CD8-positive, alpha-beta T cell (primary cell): ENCODE measurements at regions of chr6 and their contacts with region 1.

Region 1: GRCh38 chr6:52664186-52664990 is 6.5 kb upstream of the TMEM14A start:
- DNase-seq: peak; percentile 5 to 70 (median 45)
- ATAC-seq: peak; percentile 66
- H3K4me3 ChIP-seq: peak overlapping the region; percentile 61 to 82
- H3K4me3 Mint-ChIP-seq: no peak overlapping the region
- H3K27ac ChIP-seq: no peak overlapping the region
- H3K27ac Mint-ChIP-seq: no peak overlapping the region
- H3K4me1 ChIP-seq: peaks cover 14% of the 10 kb centered on the region
- H3K4me1 Mint-ChIP-seq: no peaks in the 10 kb centered on the region
- H3K27me3 ChIP-seq: peaks cover 0 to 10% of the 10 kb centered on the region in 2 experiments
- H3K27me3 Mint-ChIP-seq: no peaks in the 10 kb centered on the region
- CTCF ChIP-seq: no peak

Region 2: GRCh38 chr6:51855310-51856082 is 808.9 kb before region 1 on chr6:
- CTCF ChIA-PET with region 1: no interaction called
- POLR2A ChIA-PET with region 1: no interaction called
- intact Hi-C with region 1: loop called in 1 of 2 experiments (anchors 5 kb)
- DNase-seq: peak in 2 of 9 experiments; percentile 28 to 49
- ATAC-seq: no peak
- H3K4me3 ChIP-seq: no peak overlapping the region
- H3K4me3 Mint-ChIP-seq: no peak overlapping the region
- H3K27ac ChIP-seq: no peak overlapping the region
- H3K27ac Mint-ChIP-seq: no peak overlapping the region
- H3K4me1 ChIP-seq: no peaks in the 10 kb centered on the region
- H3K4me1 Mint-ChIP-seq: no peaks in the 10 kb centered on the region
- H3K27me3 ChIP-seq: no peaks in the 10 kb centered on the region
- H3K27me3 Mint-ChIP-seq: peaks cover 8% of the 10 kb centered on the region
- CTCF ChIP-seq: peak; percentile 65

Region 3: GRCh38 chr6:52063584-52064344 is 600.6 kb before region 1 on chr6:
- CTCF ChIA-PET with region 1: no interaction called
- POLR2A ChIA-PET with region 1: no interaction called
- intact Hi-C with region 1: loop called (anchors 5 to 10 kb)
- DNase-seq: peak; percentile 10 to 80 (median 59)
- ATAC-seq: peak; percentile 84
- H3K4me3 ChIP-seq: peak overlapping the region; percentile 17 to 27
- H3K4me3 Mint-ChIP-seq: peak overlapping the region; percentile 78
- H3K27ac ChIP-seq: no peak overlapping the region
- H3K27ac Mint-ChIP-seq: peak overlapping the region; percentile 79
- H3K4me1 ChIP-seq: peaks cover 13% of the 10 kb centered on the region
- H3K4me1 Mint-ChIP-seq: peaks cover 11% of the 10 kb centered on the region
- H3K27me3 ChIP-seq: no peaks in the 10 kb centered on the region
- H3K27me3 Mint-ChIP-seq: no peaks in the 10 kb centered on the region
- CTCF ChIP-seq: peak; percentile 49

Region 4: GRCh38 chr6:52162940-52163908 is 501.2 kb before region 1 on chr6:
- CTCF ChIA-PET with region 1: interaction called, 3 read pairs
- POLR2A ChIA-PET with region 1: no interaction called
- intact Hi-C with region 1: loop called in 1 of 2 experiments (anchors 2 kb)
- DNase-seq: peak in 2 of 9 experiments; percentile 57 to 66
- ATAC-seq: peak; percentile 69
- H3K4me3 ChIP-seq: no peak overlapping the region
- H3K4me3 Mint-ChIP-seq: no peak overlapping the region
- H3K27ac ChIP-seq: no peak overlapping the region
- H3K27ac Mint-ChIP-seq: no peak overlapping the region
- H3K4me1 ChIP-seq: no peaks in the 10 kb centered on the region
- H3K4me1 Mint-ChIP-seq: no peaks in the 10 kb centered on the region
- H3K27me3 ChIP-seq: peaks cover 0 to 2% of the 10 kb centered on the region in 2 experiments
- H3K27me3 Mint-ChIP-seq: peaks cover 15% of the 10 kb centered on the region
- CTCF ChIP-seq: peak; percentile 67

Region 5: GRCh38 chr6:52407467-52407866 is 256.9 kb before region 1 on chr6:
- CTCF ChIA-PET with region 1: interaction called, 6 read pairs
- POLR2A ChIA-PET with region 1: no interaction called
- intact Hi-C with region 1: loop called (anchors 1 to 2 kb)
- DNase-seq: peak in 2 of 9 experiments; percentile 53 to 68
- ATAC-seq: peak; percentile 93
- H3K4me3 ChIP-seq: no peak overlapping the region
- H3K4me3 Mint-ChIP-seq: no peak overlapping the region
- H3K27ac ChIP-seq: no peak overlapping the region
- H3K27ac Mint-ChIP-seq: peak overlapping the region; percentile 70
- H3K4me1 ChIP-seq: no peaks in the 10 kb centered on the region
- H3K4me1 Mint-ChIP-seq: peaks cover 38% of the 10 kb centered on the region
- H3K27me3 ChIP-seq: no peaks in the 10 kb centered on the region
- H3K27me3 Mint-ChIP-seq: no peaks in the 10 kb centered on the region
- CTCF ChIP-seq: peak; percentile 48

Region 6: DNA sequence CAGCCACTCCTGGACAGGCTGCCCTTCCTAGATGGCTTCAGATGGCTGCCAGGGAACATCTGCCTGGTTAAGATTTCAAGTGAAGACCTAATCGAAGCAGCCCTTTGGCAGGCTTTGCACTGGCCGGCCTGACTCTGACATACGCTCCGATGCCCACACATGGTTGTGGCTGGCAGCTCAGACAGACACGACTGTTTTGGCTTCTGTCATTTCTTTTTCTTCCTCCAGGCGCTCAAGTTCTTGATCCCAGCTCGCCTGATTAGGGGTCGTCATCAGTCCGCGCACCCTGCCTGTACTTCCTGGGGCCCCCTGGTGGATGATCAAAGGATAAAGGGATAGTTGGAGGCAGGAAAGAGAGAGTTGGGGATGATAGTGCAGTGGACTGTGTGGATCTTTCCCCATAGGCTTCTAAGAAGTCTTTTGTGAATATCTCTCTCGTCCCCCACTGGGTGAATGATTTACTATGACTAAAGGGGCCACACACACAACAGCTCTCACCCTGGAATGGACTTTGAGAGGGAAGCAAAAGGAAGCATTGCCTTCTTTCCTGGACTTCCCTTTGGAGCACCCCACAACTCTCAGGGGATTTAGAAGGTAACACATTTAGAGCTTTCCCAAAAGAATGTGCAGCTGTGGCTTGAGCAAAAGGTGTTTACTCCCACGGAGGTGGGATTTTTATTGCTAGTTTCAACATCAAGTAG is 66.1 kb before region 1 on chr6:
- CTCF ChIA-PET with region 1: interaction called, 10 read pairs
- POLR2A ChIA-PET with region 1: no interaction called
- intact Hi-C with region 1: no loop called
- DNase-seq: peak in 4 of 9 experiments; percentile 30 to 58 (median 40)
- ATAC-seq: peak; percentile 62
- H3K4me3 ChIP-seq: no peak overlapping the region
- H3K4me3 Mint-ChIP-seq: no peak overlapping the region
- H3K27ac ChIP-seq: no peak overlapping the region
- H3K27ac Mint-ChIP-seq: no peak overlapping the region
- H3K4me1 ChIP-seq: no peaks in the 10 kb centered on the region
- H3K4me1 Mint-ChIP-seq: peaks cover 8% of the 10 kb centered on the region
- H3K27me3 ChIP-seq: no peaks in the 10 kb centered on the region
- H3K27me3 Mint-ChIP-seq: peaks cover 12% of the 10 kb centered on the region
- CTCF ChIP-seq: no peak

Region 7: DNA sequence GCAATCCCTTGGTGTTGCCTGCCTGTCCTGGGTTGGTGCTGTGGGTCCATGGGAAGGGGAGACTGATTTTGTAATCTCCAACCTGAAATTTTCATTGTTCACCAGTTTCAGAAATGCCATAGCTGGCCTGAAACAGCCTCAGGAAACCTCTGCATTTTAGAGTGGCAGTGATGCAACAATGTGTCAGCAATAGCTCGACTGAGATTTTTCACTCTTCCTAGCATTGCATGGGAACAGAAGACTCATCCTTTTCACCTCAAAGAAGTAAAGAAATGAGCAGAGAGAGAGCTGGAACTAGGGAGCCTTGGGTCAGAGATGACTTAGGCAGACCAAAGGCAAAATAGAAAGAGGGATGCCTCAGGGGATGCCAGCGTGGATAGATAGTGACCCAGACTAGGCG is 17.2 kb before region 1 on chr6:
- CTCF ChIA-PET with region 1: interaction called, 78 read pairs
- POLR2A ChIA-PET with region 1: no interaction called
- intact Hi-C with region 1: loop called (anchors 1 kb)
- DNase-seq: no peak
- ATAC-seq: no peak
- H3K4me3 ChIP-seq: no peak overlapping the region
- H3K4me3 Mint-ChIP-seq: no peak overlapping the region
- H3K27ac ChIP-seq: no peak overlapping the region
- H3K27ac Mint-ChIP-seq: no peak overlapping the region
- H3K4me1 ChIP-seq: no peaks in the 10 kb centered on the region
- H3K4me1 Mint-ChIP-seq: peaks cover 5% of the 10 kb centered on the region
- H3K27me3 ChIP-seq: no peaks in the 10 kb centered on the region
- H3K27me3 Mint-ChIP-seq: peaks cover 8% of the 10 kb centered on the region
- CTCF ChIP-seq: no peak